ENCODE measurements at regions of chr1 and their contacts with region 1.

Region 1: DNA sequence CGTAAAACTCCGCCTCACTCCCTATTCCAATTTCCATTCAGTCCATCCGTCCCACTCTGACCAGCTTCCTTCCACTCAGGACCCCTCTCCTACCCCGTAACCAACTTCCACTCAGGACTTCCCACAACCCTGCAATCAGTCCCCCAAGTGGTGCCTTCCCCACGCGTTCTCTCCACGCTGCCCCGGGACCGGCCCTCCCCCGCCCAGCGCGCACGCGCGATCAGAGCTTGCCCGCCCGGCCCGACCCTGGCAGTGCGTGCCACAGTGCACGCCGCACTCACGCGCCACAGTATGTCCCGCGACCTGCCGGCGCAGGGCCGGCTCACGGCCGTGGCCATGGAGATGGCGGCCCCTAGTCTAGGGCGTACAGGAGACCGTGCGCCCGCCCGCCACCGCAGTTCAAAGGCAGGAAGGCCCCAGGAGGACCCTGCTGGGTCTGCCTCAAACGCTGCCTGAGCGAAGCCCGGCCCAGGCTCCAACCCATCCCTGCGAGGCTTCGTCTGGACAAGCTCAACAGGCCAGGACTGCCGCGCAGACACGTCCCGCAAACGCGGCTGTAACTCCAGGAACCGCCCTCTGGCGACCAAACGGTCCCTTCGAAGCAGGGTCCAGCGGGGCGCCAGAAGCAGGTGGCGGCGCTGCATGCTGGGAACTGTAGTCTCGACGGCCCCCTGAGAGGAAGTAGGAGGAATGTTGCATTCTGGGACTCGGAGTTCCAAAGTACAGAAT is at the start of gene NDC1:
- DNase-seq: peak; percentile 92 to 96 (median 93)
- H3K4me3 ChIP-seq: peak within 1 kb of the TSS; percentile 83 to 87
- H3K4me3 Mint-ChIP-seq: peak within 1 kb of the TSS; percentile 91 to 99 (median 98)
- H3K27ac ChIP-seq: peak within 1 kb of the TSS; percentile 95
- H3K27ac Mint-ChIP-seq: peak within 1 kb of the TSS; percentile 97 to 99 (median 98)
- H3K4me1 ChIP-seq: peaks cover 5% of the 10 kb centered on the region
- H3K4me1 Mint-ChIP-seq: peaks cover 15 to 38% (median 24%) of the 10 kb centered on the region in 4 donors
- H3K27me3 ChIP-seq: no peaks in the 10 kb centered on the region
- H3K27me3 Mint-ChIP-seq: peaks cover 0 to 2% of the 10 kb centered on the region in 2 donors
- total RNA-seq, gene NDC1: 10.9 to 11.0 TPM

Region 2: GRCh38 chr1:53238197-53239155 is 599.6 kb before region 1 on chr1 and contains the start of gene MAGOH:
- CTCF ChIA-PET with region 1: no interaction called
- POLR2A ChIA-PET with region 1: no interaction called
- intact Hi-C with region 1: loop called (anchors 10 kb)
- DNase-seq: peak; percentile 93 to 95 (median 94)
- H3K4me3 ChIP-seq: peak within 1 kb of the TSS; percentile 87 to 96
- H3K4me3 Mint-ChIP-seq: peak within 1 kb of the TSS; percentile 96 to 99 (median 97)
- H3K27ac ChIP-seq: peak within 1 kb of the TSS; percentile 87
- H3K27ac Mint-ChIP-seq: peak within 1 kb of the TSS; percentile 97 to 99 (median 98)
- H3K4me1 ChIP-seq: peaks cover 31% of the 10 kb centered on the region
- H3K4me1 Mint-ChIP-seq: peaks cover 21 to 36% (median 29%) of the 10 kb centered on the region in 4 donors
- H3K27me3 ChIP-seq: no peaks in the 10 kb centered on the region
- H3K27me3 Mint-ChIP-seq: no peaks in the 10 kb centered on the region
- total RNA-seq, gene MAGOH: 46.7 to 49.9 TPM

Region 3: DNA sequence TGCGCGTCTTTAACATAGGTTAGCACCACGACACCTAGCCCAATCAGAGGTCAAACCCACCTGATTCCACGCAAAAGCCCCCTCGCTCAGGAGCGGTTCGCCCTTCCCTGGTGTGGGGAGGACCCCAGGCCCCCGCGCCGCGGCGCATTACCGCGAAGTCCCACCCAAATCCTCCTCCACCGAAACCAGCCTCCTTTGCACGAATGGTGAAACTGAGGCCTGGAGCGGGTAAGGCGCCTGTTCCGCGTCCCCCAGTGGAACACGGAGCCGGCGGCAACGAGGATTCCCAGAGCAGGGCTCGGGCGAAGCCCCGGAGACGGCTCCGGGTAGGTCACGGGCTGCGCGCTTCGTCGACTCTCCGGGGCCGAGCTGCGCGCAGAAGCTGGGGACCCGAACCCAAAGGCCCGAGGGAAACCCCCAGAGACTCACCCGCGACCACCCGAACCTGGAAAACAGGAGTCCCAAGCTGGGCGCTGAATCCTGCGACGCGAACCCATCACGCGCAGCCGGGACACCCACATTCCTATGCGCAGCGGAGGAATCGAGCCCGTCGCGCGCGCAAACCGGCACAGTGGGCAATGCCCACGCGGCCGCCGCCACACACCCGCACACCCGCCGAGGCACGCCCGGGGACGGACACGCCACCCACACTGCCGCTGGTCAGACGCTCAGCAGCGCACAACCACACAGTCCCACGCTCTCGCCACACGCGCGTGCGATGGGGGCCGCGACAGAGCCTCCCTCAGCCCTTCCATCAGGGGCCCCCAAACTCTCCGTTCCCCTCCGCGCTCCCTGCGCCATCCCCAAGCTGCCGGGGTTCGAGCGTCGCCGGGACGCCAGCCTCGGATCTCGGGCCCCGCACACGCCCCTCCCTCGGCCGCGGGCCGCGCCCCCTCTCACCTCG is 99.6 kb before region 1 on chr1:
- CTCF ChIA-PET with region 1: no interaction called
- POLR2A ChIA-PET with region 1: no interaction called
- intact Hi-C with region 1: no loop called
- DNase-seq: no peak
- H3K4me3 ChIP-seq: no peak overlapping the region
- H3K4me3 Mint-ChIP-seq: peak overlapping the region in 6 of 8 donors; percentile 15 to 71 (median 34)
- H3K27ac ChIP-seq: no peak overlapping the region
- H3K27ac Mint-ChIP-seq: no peak overlapping the region
- H3K4me1 ChIP-seq: peaks cover 9% of the 10 kb centered on the region
- H3K4me1 Mint-ChIP-seq: peaks cover 0 to 7% (median 0%) of the 10 kb centered on the region in 4 donors
- H3K27me3 ChIP-seq: peaks cover 17% of the 10 kb centered on the region
- H3K27me3 Mint-ChIP-seq: peaks cover 39 to 51% of the 10 kb centered on the region in 2 donors

Region 4: DNA sequence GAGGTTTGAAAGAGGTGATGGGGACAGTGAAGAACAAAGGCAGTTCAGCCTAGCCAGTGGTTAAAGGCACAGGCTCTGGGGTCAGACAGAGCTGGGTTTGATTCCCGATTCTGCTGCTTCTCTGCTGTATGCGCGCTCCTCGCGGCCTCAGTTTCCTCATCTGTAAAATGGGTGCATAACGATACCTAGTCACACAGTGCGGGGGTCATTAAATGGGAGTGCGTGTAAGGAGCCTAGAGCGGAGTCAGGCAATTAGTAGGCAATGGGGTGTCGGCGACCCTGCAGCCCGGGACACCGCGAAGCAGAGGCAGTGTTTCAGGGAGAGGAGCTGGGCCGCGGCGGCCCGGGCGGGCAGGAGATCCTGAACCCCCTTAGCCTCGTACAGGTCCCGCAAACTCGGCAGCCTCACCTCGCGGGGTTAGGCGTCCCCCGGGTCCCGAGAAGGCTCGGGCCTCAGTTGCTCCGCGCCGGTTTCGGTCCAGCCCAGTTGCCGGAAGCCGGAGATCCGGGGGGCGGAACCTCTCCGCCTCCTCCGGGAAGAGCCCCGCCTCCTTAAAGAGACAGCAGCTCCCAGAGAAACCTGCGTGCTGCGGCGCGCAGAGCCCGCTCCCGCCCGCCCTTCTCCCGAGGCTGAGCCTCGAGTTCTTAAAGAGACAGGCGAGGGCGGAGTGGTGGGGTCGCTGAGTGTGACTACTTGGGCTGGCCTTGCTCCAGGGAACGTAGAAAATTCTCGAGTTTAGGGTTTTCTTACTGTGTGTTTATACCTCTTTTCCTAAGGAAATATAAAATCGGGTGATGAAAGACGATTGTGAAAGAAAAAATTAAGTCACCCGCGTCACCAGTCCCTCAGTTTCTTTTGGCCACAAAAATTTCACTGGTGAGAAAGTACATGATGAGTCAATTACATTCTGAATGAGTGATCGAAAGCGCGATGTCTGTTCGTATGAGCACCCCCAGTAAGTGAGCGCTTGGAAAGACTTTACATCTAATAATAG is 51.5 kb after region 1 on chr1 and contains the start of gene YIPF1:
- CTCF ChIA-PET with region 1: interaction called, 3 read pairs
- POLR2A ChIA-PET with region 1: interaction called, 4 read pairs
- intact Hi-C with region 1: loop called (anchors 1 kb)
- DNase-seq: peak; percentile 82 to 86 (median 84)
- H3K4me3 ChIP-seq: peak within 1 kb of the TSS; percentile 59 to 79
- H3K4me3 Mint-ChIP-seq: peak within 1 kb of the TSS; percentile 92 to 98 (median 96)
- H3K27ac ChIP-seq: peak within 1 kb of the TSS; percentile 50
- H3K27ac Mint-ChIP-seq: peak within 1 kb of the TSS; percentile 89 to 96 (median 94)
- H3K4me1 ChIP-seq: peaks cover 28% of the 10 kb centered on the region
- H3K4me1 Mint-ChIP-seq: peaks cover 28 to 49% (median 38%) of the 10 kb centered on the region in 4 donors
- H3K27me3 ChIP-seq: no peaks in the 10 kb centered on the region
- H3K27me3 Mint-ChIP-seq: peaks cover 0 to 2% of the 10 kb centered on the region in 2 donors
- total RNA-seq, gene YIPF1: 14.8 to 15.2 TPM

Region 5: DNA sequence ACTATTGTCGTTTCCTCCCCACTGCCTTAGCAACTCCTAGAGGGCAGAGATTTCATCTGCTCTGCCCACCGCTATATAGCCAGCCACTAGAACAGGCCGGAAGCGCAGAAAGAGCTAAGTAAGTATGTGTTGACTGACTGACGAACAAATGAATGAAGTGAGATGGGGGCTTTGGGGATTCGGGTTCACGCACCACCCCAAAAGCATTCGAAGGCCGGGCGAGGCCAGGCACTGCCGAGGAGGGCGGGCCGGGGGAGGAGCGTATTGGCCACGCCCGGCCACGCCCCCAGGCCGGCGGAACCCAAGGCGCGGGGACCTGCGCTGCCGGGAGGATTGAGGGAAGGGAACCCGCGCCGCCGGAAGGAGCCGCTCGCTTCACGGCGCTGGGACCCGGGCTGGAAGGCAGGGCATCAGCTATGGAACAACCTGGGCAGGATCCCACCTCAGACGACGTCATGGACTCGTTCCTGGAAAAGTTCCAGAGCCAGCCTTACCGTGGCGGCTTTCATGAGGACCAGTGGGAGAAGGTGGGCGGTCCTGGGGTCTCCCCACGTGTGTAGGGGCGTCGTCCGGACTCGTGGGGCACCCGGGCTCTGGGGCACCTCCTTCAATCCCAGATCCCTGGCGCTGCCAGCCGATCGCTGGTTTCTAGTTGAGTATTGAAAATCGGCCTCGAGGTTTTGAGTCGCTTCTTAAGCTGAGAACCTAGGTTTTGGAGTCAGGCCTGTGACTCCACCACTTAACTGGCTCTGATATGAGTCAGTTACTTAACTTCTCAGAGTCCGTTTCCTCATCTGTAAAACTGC is 877.6 kb after region 1 on chr1 and contains the start of gene TTC4:
- CTCF ChIA-PET with region 1: no interaction called
- POLR2A ChIA-PET with region 1: no interaction called
- intact Hi-C with region 1: loop called (anchors 1 kb)
- DNase-seq: peak; percentile 70 to 89 (median 85)
- H3K4me3 ChIP-seq: peak within 1 kb of the TSS; percentile 76 to 96
- H3K4me3 Mint-ChIP-seq: peak within 1 kb of the TSS; percentile 78 to 93 (median 91)
- H3K27ac ChIP-seq: peak within 1 kb of the TSS; percentile 78
- H3K27ac Mint-ChIP-seq: peak within 1 kb of the TSS; percentile 47 to 98 (median 94)
- H3K4me1 ChIP-seq: peaks cover 17% of the 10 kb centered on the region
- H3K4me1 Mint-ChIP-seq: peaks cover 22 to 38% (median 31%) of the 10 kb centered on the region in 4 donors
- H3K27me3 ChIP-seq: no peaks in the 10 kb centered on the region
- H3K27me3 Mint-ChIP-seq: no peaks in the 10 kb centered on the region
- total RNA-seq, gene TTC4: 20.0 to 24.5 TPM

Region 6: GRCh38 chr1:54764133-54764921 is 926.2 kb after region 1 on chr1 and contains the start of gene PARS2:
- CTCF ChIA-PET with region 1: no interaction called
- POLR2A ChIA-PET with region 1: no interaction called
- intact Hi-C with region 1: loop called (anchors 1 kb)
- DNase-seq: peak; percentile 92 to 98 (median 98)
- H3K4me3 ChIP-seq: peak within 1 kb of the TSS; percentile 92 to 100
- H3K4me3 Mint-ChIP-seq: peak within 1 kb of the TSS; percentile 92 to 98 (median 94)
- H3K27ac ChIP-seq: peak within 1 kb of the TSS; percentile 71
- H3K27ac Mint-ChIP-seq: peak within 1 kb of the TSS; percentile 84 to 97 (median 93)
- H3K4me1 ChIP-seq: peaks cover 11% of the 10 kb centered on the region
- H3K4me1 Mint-ChIP-seq: peaks cover 8 to 27% (median 19%) of the 10 kb centered on the region in 4 donors
- H3K27me3 ChIP-seq: no peaks in the 10 kb centered on the region
- H3K27me3 Mint-ChIP-seq: no peaks in the 10 kb centered on the region
- total RNA-seq, gene PARS2: 5.0 to 6.0 TPM

Measured in CD4-positive, alpha-beta memory T cell (primary cell).